T-cell (primary cell): ENCODE measurements at regions of chr18 and their contacts with region 1.

Region 1: DNA sequence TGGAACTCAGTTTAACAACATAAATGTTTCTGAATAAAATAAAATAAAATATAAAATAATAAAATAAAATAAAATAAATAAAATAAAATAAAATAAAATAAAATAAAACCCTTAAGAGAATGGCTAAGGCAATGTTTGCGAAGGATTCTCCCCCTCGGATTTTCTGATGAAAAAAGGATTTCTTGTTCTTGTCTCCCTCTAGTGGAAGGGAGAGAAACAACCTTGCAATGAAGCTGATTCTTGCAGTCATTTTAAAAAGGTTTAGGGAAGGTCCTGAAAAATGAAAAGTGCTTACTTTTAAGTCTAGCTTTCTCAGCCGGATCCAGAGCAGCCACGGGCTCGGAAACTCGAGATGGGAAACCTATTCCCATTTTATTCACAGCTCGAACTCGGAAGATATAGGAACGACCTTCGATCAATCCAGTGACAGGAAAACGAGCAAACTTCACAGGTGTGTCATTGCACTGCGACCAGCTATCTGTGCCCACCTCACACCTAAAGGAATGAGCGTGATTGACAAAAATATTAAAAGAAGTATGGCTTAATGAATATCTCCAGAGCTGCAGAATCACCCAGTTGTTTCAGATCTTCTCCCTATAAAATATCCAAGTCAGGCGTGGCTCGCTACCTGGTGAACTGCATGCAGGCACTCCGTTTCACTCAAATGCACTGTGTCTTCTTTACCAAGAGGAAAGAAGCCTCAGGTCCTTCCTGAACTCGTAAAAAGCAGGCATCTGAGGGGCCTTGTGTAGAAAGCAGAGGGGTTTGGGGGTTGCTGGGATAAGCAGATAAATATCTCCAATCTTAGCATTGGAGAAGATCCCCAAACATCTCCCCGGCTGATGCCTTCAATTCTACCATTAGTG is 68.1 kb downstream of the MYOM1 start:
- DNase-seq: peak in 1 of 35 experiments; percentile 60
- ATAC-seq: no peak
- H3K4me3 ChIP-seq: no peak overlapping the region
- H3K4me3 Mint-ChIP-seq: no peak overlapping the region
- H3K27ac ChIP-seq: no peak overlapping the region
- H3K27ac Mint-ChIP-seq: no peak overlapping the region
- H3K4me1 ChIP-seq: peaks cover 0 to 2% of the 10 kb centered on the region in 2 experiments
- H3K4me1 Mint-ChIP-seq: peaks cover 0 to 10% (median 6%) of the 10 kb centered on the region in 3 donors
- H3K27me3 ChIP-seq: no peaks in the 10 kb centered on the region
- H3K27me3 Mint-ChIP-seq: no peaks in the 10 kb centered on the region

Region 2: DNA sequence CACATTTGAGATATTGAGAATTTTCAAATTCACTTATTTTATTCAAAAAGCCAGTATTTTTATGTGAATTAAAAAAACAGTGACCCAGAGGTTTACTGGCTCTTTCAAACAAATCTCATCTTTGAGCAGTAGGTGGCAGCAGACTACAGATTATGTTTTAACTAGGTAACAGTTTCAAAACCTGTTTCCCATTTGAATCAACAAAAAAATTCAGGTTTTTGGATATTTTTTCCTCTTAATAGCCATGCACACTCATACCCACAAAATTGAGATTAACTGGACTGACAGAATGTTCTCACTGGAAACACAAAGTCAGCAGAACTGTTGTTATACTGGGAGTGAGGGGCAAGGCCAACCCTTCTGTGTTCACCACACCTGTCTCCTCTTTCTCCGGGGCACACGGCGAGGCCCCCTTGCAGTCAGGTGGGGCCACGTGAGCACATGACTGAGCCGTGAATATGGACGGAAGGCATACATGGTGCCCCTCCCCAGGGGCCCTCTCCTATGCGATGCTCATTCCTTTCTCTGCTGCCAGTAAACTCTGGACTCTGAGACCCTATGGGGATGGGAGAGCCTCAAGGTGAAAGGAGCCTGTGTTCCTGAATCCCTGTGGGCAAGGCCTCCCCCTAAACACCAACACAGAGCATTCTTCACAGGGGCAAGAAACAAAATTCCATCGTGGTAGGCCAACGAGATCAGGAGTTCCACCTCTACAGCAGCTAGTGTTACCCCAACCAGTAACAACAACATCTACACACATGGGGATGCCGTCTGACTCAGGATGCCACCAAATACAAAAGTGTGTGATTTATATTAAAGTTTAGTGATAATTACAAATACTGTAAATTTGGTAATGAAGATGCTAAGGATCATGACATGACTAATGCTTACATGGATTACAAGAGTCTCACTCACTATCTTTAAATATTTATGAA is 219.1 kb before region 1 on chr18:
- CTCF ChIA-PET with region 1: interaction called in 1 of 2 experiments, 21 read pairs
- POLR2A ChIA-PET with region 1: no interaction called
- DNase-seq: peak in 21 of 35 experiments; percentile 8 to 85 (median 37)
- ATAC-seq: peak; percentile 60 to 75 (median 66)
- H3K4me3 ChIP-seq: no peak overlapping the region
- H3K4me3 Mint-ChIP-seq: peak overlapping the region in 1 of 3 donors; percentile 35
- H3K27ac ChIP-seq: peak overlapping the region; percentile 52
- H3K27ac Mint-ChIP-seq: peak overlapping the region; percentile 88 to 89
- H3K4me1 ChIP-seq: peaks cover 0 to 6% of the 10 kb centered on the region in 2 experiments
- H3K4me1 Mint-ChIP-seq: peaks cover 29 to 36% (median 35%) of the 10 kb centered on the region in 3 donors
- H3K27me3 ChIP-seq: no peaks in the 10 kb centered on the region
- H3K27me3 Mint-ChIP-seq: no peaks in the 10 kb centered on the region

Region 3: DNA sequence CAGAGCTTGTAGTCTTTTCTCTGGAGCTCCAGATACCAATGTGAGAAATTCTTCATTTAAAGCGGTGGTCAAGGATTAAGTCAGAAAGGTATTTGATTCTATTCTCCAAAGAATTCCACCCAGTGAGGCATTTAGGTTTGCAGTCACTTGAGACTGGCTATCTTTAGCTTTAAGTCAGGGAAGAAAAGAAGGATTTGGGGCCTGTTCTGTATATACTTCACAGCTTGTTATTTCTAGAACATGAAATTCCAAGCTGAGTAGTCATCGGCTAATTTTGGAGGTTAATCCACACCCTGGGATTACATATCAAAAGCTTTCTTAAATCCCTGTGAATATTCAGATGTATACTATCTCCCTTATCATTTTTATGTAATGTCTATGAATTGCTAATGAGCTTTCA is 28.7 kb after region 1 on chr18:
- CTCF ChIA-PET with region 1: interaction called, 3 to 13 read pairs
- POLR2A ChIA-PET with region 1: no interaction called
- DNase-seq: no peak
- ATAC-seq: no peak
- H3K4me3 ChIP-seq: no peak overlapping the region
- H3K4me3 Mint-ChIP-seq: no peak overlapping the region
- H3K27ac ChIP-seq: no peak overlapping the region
- H3K27ac Mint-ChIP-seq: no peak overlapping the region
- H3K4me1 ChIP-seq: no peaks in the 10 kb centered on the region
- H3K4me1 Mint-ChIP-seq: peaks cover 0 to 3% (median 0%) of the 10 kb centered on the region in 3 donors
- H3K27me3 ChIP-seq: no peaks in the 10 kb centered on the region
- H3K27me3 Mint-ChIP-seq: no peaks in the 10 kb centered on the region

Region 4: DNA sequence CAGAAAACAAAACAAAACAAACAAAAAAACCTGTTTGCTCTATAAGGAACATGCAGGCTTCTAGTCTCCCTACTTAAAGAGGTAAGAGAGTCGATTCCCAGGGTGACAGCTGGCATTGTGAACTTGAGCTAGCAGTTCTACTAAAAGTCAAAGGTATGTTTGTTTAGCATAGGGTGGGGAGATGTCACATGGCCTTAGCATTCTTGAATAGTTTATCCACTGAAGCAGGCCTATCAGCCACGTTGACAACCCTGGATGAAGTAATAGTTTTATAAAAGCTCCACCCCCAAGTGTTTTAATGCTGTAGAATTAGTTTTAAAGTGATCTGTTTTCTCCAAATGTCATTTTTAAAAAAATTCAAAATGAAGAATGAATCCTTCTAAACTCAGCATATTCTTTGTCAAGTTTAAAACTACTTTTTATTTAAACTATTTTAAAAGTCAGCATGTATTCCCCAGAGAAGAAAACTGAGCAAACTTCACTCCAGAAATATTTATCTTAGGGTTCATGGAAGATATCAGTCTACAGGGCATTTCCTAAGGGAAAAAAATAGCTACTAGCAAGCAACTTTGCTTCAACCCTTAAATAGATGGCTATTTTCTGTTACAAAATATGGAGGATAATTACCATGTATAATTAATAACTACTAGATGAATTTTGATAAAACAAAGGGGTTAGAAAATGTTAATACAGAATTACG is 66.5 kb after region 1 on chr18:
- CTCF ChIA-PET with region 1: interaction called in 1 of 2 experiments, 12 read pairs
- POLR2A ChIA-PET with region 1: no interaction called
- DNase-seq: no peak
- ATAC-seq: no peak
- H3K4me3 ChIP-seq: no peak overlapping the region
- H3K4me3 Mint-ChIP-seq: no peak overlapping the region
- H3K27ac ChIP-seq: no peak overlapping the region
- H3K27ac Mint-ChIP-seq: no peak overlapping the region
- H3K4me1 ChIP-seq: peaks cover 3 to 7% of the 10 kb centered on the region in 2 experiments
- H3K4me1 Mint-ChIP-seq: peaks cover 8 to 14% (median 11%) of the 10 kb centered on the region in 3 donors
- H3K27me3 ChIP-seq: no peaks in the 10 kb centered on the region
- H3K27me3 Mint-ChIP-seq: no peaks in the 10 kb centered on the region

Region 5: DNA sequence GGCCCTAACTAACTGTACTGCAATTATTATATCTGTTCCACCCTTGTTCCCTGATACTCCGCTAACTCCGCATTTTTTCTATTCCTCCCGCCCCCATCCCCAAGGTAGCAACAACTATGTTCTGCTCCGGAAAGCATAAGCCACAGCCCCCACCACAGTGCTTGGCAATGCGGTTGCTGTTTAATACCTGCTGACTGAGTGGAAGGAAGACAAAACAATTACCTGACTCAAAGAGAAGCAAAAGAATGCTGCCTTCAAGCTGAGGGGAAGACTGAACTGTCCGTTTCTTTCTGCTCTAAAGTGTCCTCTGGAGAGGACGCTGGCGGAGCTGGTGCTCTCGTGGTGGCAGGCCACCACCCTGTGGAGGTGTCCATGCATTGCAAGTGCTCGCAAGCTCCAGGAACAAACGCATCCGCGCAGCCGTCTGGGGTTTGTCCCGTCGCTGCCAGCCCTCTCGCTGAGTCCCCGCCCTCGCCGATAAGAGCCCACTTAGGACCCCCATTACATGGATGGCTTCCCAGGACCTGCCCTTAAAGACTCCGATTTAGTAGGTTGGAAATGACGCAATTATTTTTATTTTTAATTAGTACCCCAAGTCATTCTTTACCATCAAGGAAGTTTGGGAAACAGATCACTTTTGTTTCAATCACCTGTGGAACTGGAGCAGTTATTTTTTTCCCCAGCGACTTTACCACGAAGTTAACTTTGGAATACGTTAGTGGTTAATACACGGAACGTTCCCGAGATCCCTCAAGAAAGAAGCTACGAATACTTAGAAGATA is 94.4 kb after region 1 on chr18:
- CTCF ChIA-PET with region 1: interaction called, 3 to 13 read pairs
- POLR2A ChIA-PET with region 1: no interaction called
- DNase-seq: peak; percentile 49 to 85 (median 69)
- ATAC-seq: peak; percentile 43 to 59 (median 52)
- H3K4me3 ChIP-seq: peak overlapping the region; percentile 90
- H3K4me3 Mint-ChIP-seq: peak overlapping the region; percentile 96 to 98 (median 97)
- H3K27ac ChIP-seq: peak overlapping the region; percentile 82
- H3K27ac Mint-ChIP-seq: peak overlapping the region; percentile 89 to 93
- H3K4me1 ChIP-seq: peaks cover 27 to 32% of the 10 kb centered on the region in 2 experiments
- H3K4me1 Mint-ChIP-seq: peaks cover 38 to 45% (median 40%) of the 10 kb centered on the region in 3 donors
- H3K27me3 ChIP-seq: no peaks in the 10 kb centered on the region
- H3K27me3 Mint-ChIP-seq: no peaks in the 10 kb centered on the region